Caco-2 (cell line): ENCODE measurements at regions of chr6 and their contacts with region 1.

Region 1: DNA sequence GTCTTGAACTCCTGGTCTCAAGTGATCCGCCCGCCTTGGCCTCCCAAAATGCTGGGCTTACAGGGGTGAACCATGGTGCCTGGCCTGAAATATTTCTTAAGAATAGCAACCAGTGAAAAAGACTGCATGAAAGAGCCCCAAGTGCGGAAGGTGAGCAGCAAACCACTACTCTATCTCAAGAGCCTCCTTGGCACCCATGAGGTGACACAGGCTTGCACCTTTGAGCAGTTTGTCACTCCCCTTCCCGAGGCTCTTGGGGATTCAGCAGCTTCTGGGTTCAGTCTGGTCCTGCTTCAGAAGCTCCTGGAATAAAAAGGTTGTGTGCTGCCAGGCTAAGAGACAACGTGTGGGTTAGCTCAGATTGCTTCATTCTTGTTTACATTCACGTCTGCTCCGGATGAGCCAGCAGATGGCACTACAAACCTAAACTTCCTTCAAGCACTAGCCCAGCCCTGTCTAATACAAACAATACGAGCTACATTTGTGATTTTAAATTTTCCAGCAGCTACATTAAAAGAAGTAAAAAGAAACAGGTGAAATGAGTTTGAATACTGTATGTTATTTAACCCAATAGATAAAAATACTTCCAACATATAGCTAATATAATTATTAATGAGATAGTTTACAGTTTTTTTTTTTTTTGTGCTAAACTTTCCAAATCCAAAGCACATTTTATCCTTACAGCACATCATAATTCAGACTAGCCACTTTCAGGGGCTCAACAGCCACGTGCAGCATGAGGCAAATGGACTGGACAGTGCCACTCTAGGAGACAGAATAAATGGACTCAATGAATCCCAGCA is 46.2 kb downstream of the GJA10 start:
- DNase-seq: peak; percentile 60 to 69
- H3K4me3 ChIP-seq: no peak overlapping the region
- H3K4me3 Mint-ChIP-seq: no peak overlapping the region
- H3K27ac Mint-ChIP-seq: no peak overlapping the region
- H3K4me1 ChIP-seq: no peaks in the 10 kb centered on the region
- H3K4me1 Mint-ChIP-seq: peaks cover 4% of the 10 kb centered on the region
- H3K27me3 ChIP-seq: no peaks in the 10 kb centered on the region
- H3K27me3 Mint-ChIP-seq: peaks cover 7% of the 10 kb centered on the region
- CTCF ChIP-seq: peak; percentile 69 to 83

Region 2: GRCh38 chr6:89970609-89971337 is 30.3 kb after region 1 on chr6:
- CTCF ChIA-PET with region 1: interaction called, 4 read pairs
- POLR2A ChIA-PET with region 1: no interaction called
- intact Hi-C with region 1: loop called (anchors 2 kb)
- DNase-seq: peak in 1 of 2 experiments; percentile 54
- H3K4me3 ChIP-seq: no peak overlapping the region
- H3K4me3 Mint-ChIP-seq: no peak overlapping the region
- H3K27ac Mint-ChIP-seq: no peak overlapping the region
- H3K4me1 ChIP-seq: no peaks in the 10 kb centered on the region
- H3K4me1 Mint-ChIP-seq: no peaks in the 10 kb centered on the region
- H3K27me3 ChIP-seq: no peaks in the 10 kb centered on the region
- H3K27me3 Mint-ChIP-seq: peaks cover 13% of the 10 kb centered on the region
- CTCF ChIP-seq: peak; percentile 33 to 59

Region 3: DNA sequence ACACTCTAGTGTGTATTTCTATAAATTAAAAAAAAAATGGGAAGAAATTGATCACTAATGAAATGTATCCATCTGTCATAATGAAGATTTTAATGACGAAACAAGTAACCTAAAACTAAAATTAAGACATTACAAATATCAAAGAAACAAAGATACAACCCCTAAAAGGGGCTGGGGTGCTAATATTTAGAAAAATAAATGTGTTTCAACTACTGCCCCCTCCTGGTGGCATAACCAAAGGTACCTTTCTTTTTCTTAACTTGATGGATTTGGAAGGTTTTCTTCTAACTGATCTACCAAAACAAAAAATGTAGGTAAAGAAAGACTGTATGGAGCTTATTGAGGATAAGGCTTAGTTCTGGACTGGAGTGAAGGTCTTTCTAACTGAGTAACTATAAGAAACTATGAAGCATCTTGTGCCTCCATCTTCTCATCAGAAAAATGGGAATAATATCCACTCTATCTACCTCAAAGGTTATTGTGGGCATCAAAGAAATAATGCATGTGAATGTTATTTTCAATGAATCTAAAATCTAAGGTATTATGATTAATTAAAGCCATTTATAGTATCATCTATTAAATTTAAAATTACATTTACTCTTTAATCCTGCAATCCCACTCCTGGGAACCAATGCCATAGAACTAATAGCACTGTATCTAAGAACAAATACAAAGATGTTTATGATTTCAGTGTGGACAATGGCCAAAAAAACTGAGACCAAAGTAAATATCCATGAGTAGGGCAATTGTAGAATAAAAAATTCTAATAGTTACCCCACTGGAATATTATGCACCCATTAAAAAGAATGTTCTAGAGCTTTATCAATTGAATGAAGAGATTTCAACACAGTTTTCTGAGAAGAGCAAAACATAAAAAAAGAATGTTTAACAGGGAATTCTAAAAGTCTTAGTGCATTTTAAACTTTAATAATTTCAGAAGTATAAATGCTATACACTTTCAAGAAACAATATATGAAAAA is 239.1 kb after region 1 on chr6:
- CTCF ChIA-PET with region 1: no interaction called
- POLR2A ChIA-PET with region 1: no interaction called
- intact Hi-C with region 1: loop called (anchors 2 kb)
- DNase-seq: no peak
- H3K4me3 ChIP-seq: no peak overlapping the region
- H3K4me3 Mint-ChIP-seq: no peak overlapping the region
- H3K27ac Mint-ChIP-seq: no peak overlapping the region
- H3K4me1 ChIP-seq: peaks cover 6% of the 10 kb centered on the region
- H3K4me1 Mint-ChIP-seq: peaks cover 20% of the 10 kb centered on the region
- H3K27me3 ChIP-seq: no peaks in the 10 kb centered on the region
- H3K27me3 Mint-ChIP-seq: no peaks in the 10 kb centered on the region
- CTCF ChIP-seq: peak; percentile 1 to 39

Region 4: GRCh38 chr6:90285611-90286381 is 345.4 kb after region 1 on chr6:
- CTCF ChIA-PET with region 1: interaction called, 4 read pairs
- POLR2A ChIA-PET with region 1: no interaction called
- intact Hi-C with region 1: loop called (anchors 5 kb)
- DNase-seq: peak; percentile 17 to 33
- H3K4me3 ChIP-seq: no peak overlapping the region
- H3K4me3 Mint-ChIP-seq: no peak overlapping the region
- H3K27ac Mint-ChIP-seq: no peak overlapping the region
- H3K4me1 ChIP-seq: 0 out of 2 replicates have a peak, but pooled peaks cover 3% of the 10 kb centered on the region
- H3K4me1 Mint-ChIP-seq: peaks cover 5% of the 10 kb centered on the region
- H3K27me3 ChIP-seq: no peaks in the 10 kb centered on the region; the same call in 1 of the 2 replicates
- H3K27me3 Mint-ChIP-seq: peaks cover 12% of the 10 kb centered on the region
- CTCF ChIP-seq: no peak

Region 5: GRCh38 chr6:90393232-90393884 is 452.9 kb after region 1 on chr6:
- CTCF ChIA-PET with region 1: interaction called, 11 read pairs
- POLR2A ChIA-PET with region 1: no interaction called
- intact Hi-C with region 1: loop called (anchors 1 kb)
- DNase-seq: peak in 1 of 2 experiments; percentile 58
- H3K4me3 ChIP-seq: no peak overlapping the region
- H3K4me3 Mint-ChIP-seq: no peak overlapping the region
- H3K27ac Mint-ChIP-seq: no peak overlapping the region
- H3K4me1 ChIP-seq: no peaks in the 10 kb centered on the region
- H3K4me1 Mint-ChIP-seq: no peaks in the 10 kb centered on the region
- H3K27me3 ChIP-seq: 0 out of 2 replicates have a peak, but pooled peaks cover 1% of the 10 kb centered on the region
- H3K27me3 Mint-ChIP-seq: peaks cover 10% of the 10 kb centered on the region
- CTCF ChIP-seq: peak; percentile 69 to 73

Region 6: DNA sequence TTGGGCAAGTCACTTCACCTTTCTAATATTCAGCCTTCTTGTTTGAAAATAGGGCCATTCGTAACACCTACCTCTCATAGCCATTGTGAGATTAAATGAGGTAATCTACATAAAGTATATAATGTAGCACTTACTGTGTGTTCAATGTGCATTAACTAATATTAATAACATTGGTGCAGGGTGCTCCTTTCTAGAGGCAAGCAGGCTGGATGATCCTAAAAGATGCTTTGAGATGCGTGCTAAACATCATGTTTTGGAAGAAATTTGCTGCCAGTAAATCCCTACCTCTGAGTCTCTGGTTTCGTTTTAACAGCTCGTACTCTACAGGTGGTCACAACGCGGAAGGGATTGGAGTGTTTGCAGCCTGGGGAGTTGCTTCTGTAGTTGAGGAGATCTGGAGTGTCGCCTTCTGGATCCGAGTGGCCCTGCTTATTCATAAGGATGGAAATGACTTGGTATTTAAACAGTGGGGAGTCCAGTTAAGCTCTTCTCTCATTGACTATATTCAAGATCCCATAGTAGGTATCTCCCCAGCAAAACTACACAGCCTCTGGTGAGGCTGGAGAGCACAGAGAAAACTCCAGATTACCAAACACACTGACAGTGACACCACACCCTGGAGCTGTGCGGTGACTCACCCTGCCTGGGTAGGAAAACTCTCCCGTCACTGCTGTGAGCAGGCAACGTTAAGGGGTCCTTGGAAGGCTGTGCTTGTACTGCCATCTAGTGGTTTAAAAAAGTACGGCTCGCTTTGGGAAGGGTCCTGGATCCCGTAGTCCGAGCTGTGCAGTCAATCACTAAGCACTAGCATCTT is 538.6 kb after region 1 on chr6:
- CTCF ChIA-PET with region 1: interaction called, 43 read pairs
- POLR2A ChIA-PET with region 1: no interaction called
- intact Hi-C with region 1: loop called (anchors 1 kb)
- DNase-seq: peak; percentile 88
- H3K4me3 ChIP-seq: no peak overlapping the region
- H3K4me3 Mint-ChIP-seq: no peak overlapping the region
- H3K27ac Mint-ChIP-seq: peak overlapping the region; percentile 10
- H3K4me1 ChIP-seq: no peaks in the 10 kb centered on the region
- H3K4me1 Mint-ChIP-seq: peaks cover 7% of the 10 kb centered on the region
- H3K27me3 ChIP-seq: no peaks in the 10 kb centered on the region
- H3K27me3 Mint-ChIP-seq: no peaks in the 10 kb centered on the region
- CTCF ChIP-seq: peak; percentile 74 to 88